Activated T-helper 1 cell treated with anti-CD3 and anti-CD28 coated beads, Interleukin-12 subunit alpha, Interleukin-12 subunit beta, Interleukin-2, Interleukin-4 antibody, amounts not matched to agents 30 ng/mL and 10 ng/mL and 1 ng/mL, durations not matched to agents 14 hours and 24 hours and 36 hours (primary cell): ENCODE measurements at regions of chr17 and their contacts with region 1.

Region 1: DNA sequence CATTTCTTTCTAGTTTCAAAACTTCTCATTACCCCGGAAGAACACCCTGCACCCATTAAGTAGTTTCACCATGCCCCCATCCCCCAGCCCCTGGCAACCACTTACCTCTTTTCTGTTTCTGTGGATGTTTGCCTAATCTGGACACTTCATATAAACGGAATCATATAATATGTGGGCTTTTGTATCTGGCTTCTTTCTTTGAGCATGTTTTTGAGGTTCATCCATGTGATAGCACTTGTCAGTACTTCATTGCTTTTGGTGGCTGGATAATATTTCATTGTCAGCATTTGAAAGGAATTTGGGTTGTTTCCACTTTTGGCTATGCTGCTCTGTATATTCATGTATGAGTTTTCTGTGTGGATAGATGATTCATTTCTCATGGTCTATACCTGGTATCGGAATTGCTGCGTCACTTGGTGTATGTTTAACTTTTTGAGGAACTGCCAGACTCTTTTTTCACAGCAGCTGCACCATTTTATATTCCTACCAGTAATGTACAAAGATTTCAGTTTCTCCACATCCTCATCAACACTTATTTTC is 30.0 kb upstream of the SLC5A10 start:
- DNase-seq: no peak
- H3K4me3 Mint-ChIP-seq: peak overlapping the region; percentile 75
- H3K27ac Mint-ChIP-seq: peak overlapping the region; percentile 97
- H3K4me1 Mint-ChIP-seq: peaks cover 52% of the 10 kb centered on the region
- H3K27me3 Mint-ChIP-seq: no peaks in the 10 kb centered on the region

Region 2: DNA sequence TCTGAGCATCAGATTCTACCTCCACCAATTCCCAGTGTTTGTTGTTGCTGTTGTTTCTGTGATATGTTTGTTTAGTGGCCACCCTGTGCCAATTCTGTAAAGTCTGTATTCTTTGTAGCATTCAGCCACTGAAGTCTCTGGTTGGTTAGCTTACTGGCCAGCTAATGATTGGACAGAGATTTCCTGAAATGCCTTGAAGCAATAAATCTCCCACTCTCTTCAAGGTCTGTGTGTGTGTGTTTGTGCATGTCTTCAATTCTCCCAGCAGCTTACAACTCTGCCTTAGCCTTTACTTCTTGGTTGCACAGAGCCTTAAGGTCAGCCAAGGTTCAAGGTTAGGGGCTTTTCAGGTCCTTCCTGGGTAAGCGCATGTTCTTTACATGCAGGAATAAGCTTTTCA is 25.8 kb before region 1 on chr17:
- intact Hi-C with region 1: loop called (anchors 1 kb)
- DNase-seq: no peak
- H3K4me3 Mint-ChIP-seq: no peak overlapping the region
- H3K27ac Mint-ChIP-seq: no peak overlapping the region
- H3K4me1 Mint-ChIP-seq: peaks cover 12% of the 10 kb centered on the region
- H3K27me3 Mint-ChIP-seq: no peaks in the 10 kb centered on the region

Region 3: DNA sequence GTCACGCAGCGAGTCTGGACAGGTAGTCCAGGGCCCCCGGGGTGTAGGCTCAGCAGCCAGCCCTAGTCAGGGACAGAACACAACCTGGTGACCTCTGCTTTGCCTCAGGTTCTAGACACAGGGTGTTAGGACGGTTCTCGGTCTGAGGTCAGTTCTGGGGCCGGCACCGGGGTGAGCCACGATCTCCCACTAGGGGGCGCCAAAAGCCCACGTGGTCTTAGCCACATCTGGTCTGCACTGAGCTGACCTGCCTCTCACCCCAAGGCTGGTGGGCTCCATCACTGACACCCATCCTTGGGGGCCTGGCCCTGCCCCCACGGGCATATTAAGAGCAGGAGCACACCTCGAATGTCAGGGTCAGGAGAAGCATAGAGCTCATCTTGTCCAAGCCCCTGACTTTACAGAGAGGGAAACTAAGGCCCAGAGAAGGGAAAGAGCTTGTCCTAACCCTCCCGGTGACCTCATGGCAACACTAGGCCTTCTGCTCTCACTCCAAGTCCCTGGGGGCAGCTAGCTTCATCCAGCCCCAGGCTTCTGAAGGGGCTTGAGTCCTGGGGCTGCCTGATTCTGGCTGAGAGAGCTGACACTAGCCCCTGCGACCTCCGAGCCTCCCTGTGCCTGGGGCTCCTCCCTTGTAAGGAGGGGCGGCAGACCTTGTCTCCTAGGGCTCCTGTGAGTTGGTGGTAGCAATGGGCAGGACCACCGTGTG is 39.0 kb after region 1 on chr17:
- intact Hi-C with region 1: loop called (anchors 5 kb)
- DNase-seq: peak; percentile 68
- H3K4me3 Mint-ChIP-seq: no peak overlapping the region
- H3K27ac Mint-ChIP-seq: peak overlapping the region; percentile 38
- H3K4me1 Mint-ChIP-seq: peaks cover 17% of the 10 kb centered on the region
- H3K27me3 Mint-ChIP-seq: no peaks in the 10 kb centered on the region